ENCODE measurements at regions of chr10 and their contacts with region 1.

Region 1: DNA sequence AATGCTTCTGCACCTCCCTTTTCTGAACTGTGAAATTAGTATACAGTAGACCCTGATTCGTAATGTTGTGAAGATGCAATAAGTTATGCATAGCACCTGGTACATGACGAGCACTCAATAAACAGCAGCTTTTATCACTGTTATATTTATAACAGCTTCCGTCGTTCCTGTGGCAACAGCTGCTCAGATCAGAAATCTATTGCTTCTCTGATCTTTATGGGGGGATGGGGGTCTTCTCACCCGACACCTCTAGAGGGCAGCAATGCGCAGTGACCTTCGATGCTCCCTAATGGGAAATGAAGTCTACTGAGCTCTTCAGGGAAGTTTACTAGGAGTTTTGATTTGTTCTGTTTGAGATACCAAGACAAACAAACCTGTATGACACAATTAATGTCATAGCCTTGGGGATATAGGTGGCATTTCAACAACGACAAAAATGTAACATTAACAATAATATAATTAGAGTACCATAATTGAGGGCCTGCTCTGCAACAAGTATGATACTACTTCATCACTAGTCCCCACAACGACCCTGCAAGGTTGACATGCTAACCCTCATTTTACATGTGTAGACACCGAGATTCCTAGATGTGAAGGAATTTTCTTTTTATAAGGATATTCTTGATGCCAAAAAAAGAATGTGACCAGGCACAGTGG is 289.6 kb downstream of the SFMBT2 start:
- DNase-seq: peak; percentile 48 to 65 (median 59)
- H3K4me3 ChIP-seq: no peak overlapping the region
- H3K4me3 Mint-ChIP-seq: no peak overlapping the region
- H3K27ac ChIP-seq: no peak overlapping the region
- H3K27ac Mint-ChIP-seq: peak overlapping the region in 5 of 7 donors; percentile 32 to 74 (median 71)
- H3K4me1 ChIP-seq: peaks cover 6% of the 10 kb centered on the region
- H3K4me1 Mint-ChIP-seq: peaks cover 4 to 7% (median 5%) of the 10 kb centered on the region in 4 donors
- H3K27me3 ChIP-seq: no peaks in the 10 kb centered on the region
- H3K27me3 Mint-ChIP-seq: peaks cover 0 to 5% of the 10 kb centered on the region in 2 donors

Region 2: GRCh38 chr10:7133278-7133677 is 12.0 kb after region 1 on chr10:
- CTCF ChIA-PET with region 1: interaction called, 12 read pairs
- POLR2A ChIA-PET with region 1: no interaction called
- intact Hi-C with region 1: no loop called
- DNase-seq: no peak
- H3K4me3 ChIP-seq: no peak overlapping the region
- H3K4me3 Mint-ChIP-seq: no peak overlapping the region
- H3K27ac ChIP-seq: no peak overlapping the region
- H3K27ac Mint-ChIP-seq: peak overlapping the region in 1 of 7 donors; percentile 23
- H3K4me1 ChIP-seq: no peaks in the 10 kb centered on the region
- H3K4me1 Mint-ChIP-seq: peaks cover 4 to 8% (median 5%) of the 10 kb centered on the region in 4 donors
- H3K27me3 ChIP-seq: peaks cover 4% of the 10 kb centered on the region
- H3K27me3 Mint-ChIP-seq: peaks cover 17 to 20% of the 10 kb centered on the region in 2 donors

Region 3: GRCh38 chr10:7192831-7193361 is 71.6 kb after region 1 on chr10:
- CTCF ChIA-PET with region 1: no interaction called
- POLR2A ChIA-PET with region 1: no interaction called
- intact Hi-C with region 1: loop called (anchors 2 kb)
- DNase-seq: peak; percentile 63 to 79 (median 68)
- H3K4me3 ChIP-seq: peak overlapping the region; percentile 17 to 26
- H3K4me3 Mint-ChIP-seq: peak overlapping the region; percentile 78 to 93 (median 83)
- H3K27ac ChIP-seq: peak overlapping the region; percentile 43
- H3K27ac Mint-ChIP-seq: peak overlapping the region; percentile 81 to 96 (median 92)
- H3K4me1 ChIP-seq: peaks cover 56% of the 10 kb centered on the region
- H3K4me1 Mint-ChIP-seq: peaks cover 45 to 68% (median 62%) of the 10 kb centered on the region in 4 donors
- H3K27me3 ChIP-seq: no peaks in the 10 kb centered on the region
- H3K27me3 Mint-ChIP-seq: no peaks in the 10 kb centered on the region

Region 4: DNA sequence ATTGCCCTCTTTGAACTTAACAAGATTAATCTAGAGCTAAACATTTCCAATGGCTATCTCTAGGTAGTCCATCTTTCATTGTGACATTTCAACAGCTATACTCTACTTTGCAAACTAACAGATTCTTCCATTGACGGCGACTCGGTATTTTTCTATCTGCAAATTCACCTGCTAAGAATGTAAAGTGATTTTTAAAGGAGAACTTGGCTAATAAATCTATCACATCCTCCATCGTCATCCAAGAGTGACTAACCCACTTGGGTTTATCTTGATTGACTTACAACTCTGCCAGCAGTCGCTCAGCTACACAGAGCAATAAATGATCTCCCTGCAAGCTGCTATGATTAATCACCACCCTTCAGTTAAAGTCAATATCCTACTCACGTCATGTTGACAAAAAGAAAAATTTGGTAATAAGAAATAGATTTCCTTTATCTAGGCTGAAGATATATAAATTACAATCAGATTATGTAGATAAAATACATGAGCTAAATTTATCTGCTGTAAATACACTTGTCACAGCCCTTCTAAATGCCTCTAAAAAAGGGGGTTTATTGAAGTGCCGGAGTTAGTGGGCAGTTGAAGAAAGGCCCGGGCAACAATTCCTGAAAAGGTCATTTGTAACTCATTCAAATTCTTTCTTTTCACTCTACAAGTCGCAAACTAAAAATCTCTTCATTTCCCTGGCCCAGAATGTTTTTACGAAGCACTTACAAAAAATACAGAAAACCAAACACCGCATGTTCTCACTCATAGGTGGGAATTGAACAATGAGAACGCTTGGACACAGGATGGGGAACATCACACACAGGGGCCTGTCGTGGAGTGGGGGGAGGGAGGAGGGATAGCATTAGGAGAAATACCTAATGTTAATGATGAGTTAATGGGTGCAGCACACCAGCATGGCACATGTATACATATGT is 190.2 kb after region 1 on chr10:
- CTCF ChIA-PET with region 1: no interaction called
- POLR2A ChIA-PET with region 1: no interaction called
- intact Hi-C with region 1: no loop called
- DNase-seq: no peak
- H3K4me3 ChIP-seq: no peak overlapping the region
- H3K4me3 Mint-ChIP-seq: no peak overlapping the region
- H3K27ac ChIP-seq: no peak overlapping the region
- H3K27ac Mint-ChIP-seq: no peak overlapping the region
- H3K4me1 ChIP-seq: peaks cover 16% of the 10 kb centered on the region
- H3K4me1 Mint-ChIP-seq: peaks cover 28 to 62% (median 31%) of the 10 kb centered on the region in 4 donors
- H3K27me3 ChIP-seq: no peaks in the 10 kb centered on the region
- H3K27me3 Mint-ChIP-seq: no peaks in the 10 kb centered on the region

Region 5: GRCh38 chr10:7417103-7417623 is 295.9 kb after region 1 on chr10:
- CTCF ChIA-PET with region 1: interaction called, 23 read pairs
- POLR2A ChIA-PET with region 1: no interaction called
- intact Hi-C with region 1: loop called (anchors 1 kb)
- DNase-seq: peak in 4 of 5 donors; percentile 46 to 53 (median 50)
- H3K4me3 ChIP-seq: no peak overlapping the region
- H3K4me3 Mint-ChIP-seq: no peak overlapping the region
- H3K27ac ChIP-seq: no peak overlapping the region
- H3K27ac Mint-ChIP-seq: no peak overlapping the region
- H3K4me1 ChIP-seq: peaks cover 20% of the 10 kb centered on the region
- H3K4me1 Mint-ChIP-seq: peaks cover 8 to 16% (median 10%) of the 10 kb centered on the region in 4 donors
- H3K27me3 ChIP-seq: no peaks in the 10 kb centered on the region
- H3K27me3 Mint-ChIP-seq: no peaks in the 10 kb centered on the region